H1 (cell line): ENCODE measurements at regions of chr1 and their contacts with region 1.

Region 1: GRCh38 chr1:2031546-2032540 is 12.7 kb downstream of the GABRD start:
- DNase-seq: no peak
- H3K4me3 ChIP-seq: no peak overlapping the region
- H3K27ac ChIP-seq: no peak overlapping the region
- H3K4me1 ChIP-seq: peaks cover 0 to 10% (median 4%) of the 10 kb centered on the region in 4 experiments; a peak in 3 of 7 replicates
- H3K27me3 ChIP-seq: no peaks in the 10 kb centered on the region
- CTCF ChIP-seq: no peak
- EP300 ChIP-seq: no peak
- POLR2A ChIP-seq: no peak
- RAD21 ChIP-seq: no peak

Region 2: GRCh38 chr1:2019172-2019543 is 12.7 kb before region 1 on chr1 and contains the start of gene GABRD:
- CTCF ChIA-PET with region 1: interaction called, 3 read pairs
- POLR2A ChIA-PET with region 1: interaction called, 11 read pairs
- DNase-seq: no peak
- H3K4me3 ChIP-seq: peak within 1 kb of the TSS; percentile 24 to 65 (median 36); a peak in 7 of 8 replicates
- H3K27ac ChIP-seq: no peak within 1 kb of the TSS
- H3K4me1 ChIP-seq: peaks cover 0 to 10% (median 3%) of the 10 kb centered on the region in 4 experiments; a peak in 5 of 7 replicates
- H3K27me3 ChIP-seq: peaks cover 3 to 19% (median 14%) of the 10 kb centered on the region in 4 experiments
- CTCF ChIP-seq: no peak
- EP300 ChIP-seq: no peak
- POLR2A ChIP-seq: no peak
- RAD21 ChIP-seq: no peak
- total RNA-seq, gene GABRD: 1.8 and 1.9 TPM in 2 replicates

Region 3: GRCh38 chr1:2115681-2116341 is 84.0 kb after region 1 on chr1:
- CTCF ChIA-PET with region 1: no interaction called
- POLR2A ChIA-PET with region 1: no interaction called
- DNase-seq: peak; percentile 51 to 76
- H3K4me3 ChIP-seq: peak overlapping the region in 3 of 4 experiments; percentile 25 to 36 (median 32); a peak in 6 of 8 replicates
- H3K27ac ChIP-seq: no peak overlapping the region; the same call in 1 of the 2 replicates
- H3K4me1 ChIP-seq: peaks cover 0 to 18% (median 13%) of the 10 kb centered on the region in 4 experiments; a peak in 6 of 7 replicates
- H3K27me3 ChIP-seq: no peaks in the 10 kb centered on the region
- CTCF ChIP-seq: no peak; a peak in 1 of 4 replicates
- EP300 ChIP-seq: no peak
- POLR2A ChIP-seq: no peak
- RAD21 ChIP-seq: no peak